ENCODE measurements at regions of chr2 and their contacts with region 1.

Region 1: DNA sequence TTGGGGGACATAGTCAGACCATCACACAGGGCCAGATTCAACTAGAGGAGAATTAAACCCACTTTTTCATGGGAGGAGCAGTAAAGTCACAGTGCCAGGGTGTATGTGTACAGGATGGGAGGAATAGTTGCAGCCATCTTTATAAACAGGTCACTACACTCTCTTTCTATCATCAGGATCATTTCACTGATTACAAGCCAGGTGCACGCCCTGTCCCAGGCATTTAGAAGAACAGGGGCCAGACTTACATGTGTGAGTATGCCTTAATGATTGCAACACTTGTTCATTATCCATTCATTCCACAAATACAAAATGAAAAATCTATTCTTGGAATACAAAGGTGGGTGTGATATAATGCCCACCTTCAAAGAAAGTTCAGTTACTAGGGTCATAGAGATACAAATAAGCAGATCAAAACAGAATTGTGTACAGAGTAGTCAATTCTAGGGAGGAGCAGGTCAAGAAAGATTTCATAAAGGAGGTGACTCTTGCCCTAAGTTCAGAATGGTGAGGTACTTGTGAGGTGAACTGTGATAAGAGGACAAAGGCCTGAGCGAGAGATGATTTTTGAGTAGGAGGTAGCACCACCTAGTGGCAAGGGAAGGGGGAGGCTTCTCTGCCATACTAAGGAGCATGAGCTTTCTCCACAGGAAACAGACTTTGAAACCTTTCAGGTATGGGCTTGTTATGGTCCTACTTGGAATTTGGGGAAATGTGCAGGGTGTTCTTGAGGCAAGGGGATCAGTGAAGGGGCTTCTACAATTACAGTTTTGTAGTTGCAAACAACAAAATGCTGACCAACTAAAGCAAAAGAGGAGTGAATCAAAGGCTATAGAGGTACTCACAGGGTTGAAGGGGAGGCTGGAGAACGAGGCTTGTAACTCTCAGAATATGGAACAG is 156.3 kb downstream of the SUCLG1 start:
- DNase-seq: peak in 3 of 6 donors; percentile 20 to 62 (median 26)
- ATAC-seq: peak; percentile 68 to 95 (median 86)
- H3K4me3 ChIP-seq: no peak overlapping the region
- H3K27ac ChIP-seq: no peak overlapping the region
- H3K4me1 ChIP-seq: no peaks in the 10 kb centered on the region
- H3K27me3 ChIP-seq: no peaks in the 10 kb centered on the region
- CTCF ChIP-seq: peak; percentile 64 to 76 (median 74)

Region 2: GRCh38 chr2:84017010-84017409 is 285.8 kb before region 1 on chr2:
- intact Hi-C with region 1: loop called in 2 of 3 experiments (anchors 5 to 10 kb)
- DNase-seq: no peak
- ATAC-seq: no peak
- H3K4me3 ChIP-seq: no peak overlapping the region
- H3K27ac ChIP-seq: no peak overlapping the region
- H3K4me1 ChIP-seq: no peaks in the 10 kb centered on the region
- H3K27me3 ChIP-seq: no peaks in the 10 kb centered on the region
- CTCF ChIP-seq: no peak

Region 3: GRCh38 chr2:84022810-84023431 is 279.8 kb before region 1 on chr2:
- intact Hi-C with region 1: loop called in 2 of 3 experiments (anchors 5 to 10 kb)
- DNase-seq: peak in 1 of 6 donors; percentile 33
- ATAC-seq: peak in 3 of 4 donors; percentile 43 to 53 (median 47)
- H3K4me3 ChIP-seq: no peak overlapping the region
- H3K27ac ChIP-seq: no peak overlapping the region
- H3K4me1 ChIP-seq: no peaks in the 10 kb centered on the region
- H3K27me3 ChIP-seq: no peaks in the 10 kb centered on the region
- CTCF ChIP-seq: peak; percentile 23 to 67 (median 49)

Measured in pancreas (tissue), 10 donors.